Activated CD8-positive, alpha-beta T cell treated with anti-CD3 and anti-CD28 coated beads, Interleukin-2, amount 10 ng/mL, durations not matched to agents 7 days and 5 days (primary cell): ENCODE measurements at regions of chr11 and their contacts with region 1.

Region 1: GRCh38 chr11:57480409-57481137 is 20.2 kb downstream of the RTN4RL2 start:
- DNase-seq: peak; percentile 87
- ATAC-seq: peak; percentile 68
- H3K4me3 Mint-ChIP-seq: no peak overlapping the region
- H3K27ac Mint-ChIP-seq: no peak overlapping the region
- H3K4me1 Mint-ChIP-seq: peaks cover 27% of the 10 kb centered on the region
- H3K27me3 Mint-ChIP-seq: peaks cover 39% of the 10 kb centered on the region

Region 2: DNA sequence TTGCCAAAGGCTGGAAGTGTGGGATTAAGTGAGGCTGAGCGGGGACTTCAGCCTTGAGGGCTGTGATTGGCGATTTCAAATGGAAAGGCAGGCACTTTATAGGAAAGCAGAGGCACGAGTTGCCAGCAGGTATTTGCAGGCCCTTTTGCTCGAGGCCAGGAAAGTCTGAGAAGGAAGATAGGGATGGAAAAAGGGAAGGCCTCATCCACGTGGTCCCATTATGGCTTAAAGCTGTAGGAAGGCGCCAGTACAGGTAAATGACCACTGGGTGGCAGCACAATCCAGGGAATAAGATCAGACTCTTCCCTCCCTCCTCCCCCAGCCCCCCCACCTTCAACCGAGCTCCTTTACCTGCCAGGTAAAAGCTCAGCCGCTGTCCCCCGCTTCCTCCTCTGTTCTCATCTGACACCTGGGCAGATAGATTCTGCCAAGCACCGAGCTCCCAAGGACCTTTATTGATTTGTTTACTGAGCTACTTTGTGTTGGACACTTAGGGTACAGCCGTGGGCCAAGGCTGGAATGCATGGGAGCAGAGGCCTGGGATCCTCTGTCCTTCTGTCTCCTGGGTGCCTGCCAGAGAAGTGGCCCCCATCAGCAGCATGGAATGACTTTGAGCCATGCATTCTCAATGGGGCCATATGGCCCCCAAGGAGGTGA is 134.9 kb before region 1 on chr11:
- CTCF ChIA-PET with region 1: interaction called, 10 read pairs
- POLR2A ChIA-PET with region 1: no interaction called
- DNase-seq: peak; percentile 76
- ATAC-seq: peak; percentile 62
- H3K4me3 Mint-ChIP-seq: no peak overlapping the region
- H3K27ac Mint-ChIP-seq: no peak overlapping the region
- H3K4me1 Mint-ChIP-seq: peaks cover 3% of the 10 kb centered on the region
- H3K27me3 Mint-ChIP-seq: peaks cover under 1% of the 10 kb centered on the region

Region 3: GRCh38 chr11:57426929-57427726 is 53.4 kb before region 1 on chr11 and contains the start of gene SLC43A3:
- CTCF ChIA-PET with region 1: interaction called, 13 read pairs
- POLR2A ChIA-PET with region 1: no interaction called
- DNase-seq: peak; percentile 80
- ATAC-seq: peak; percentile 70
- H3K4me3 Mint-ChIP-seq: peak within 1 kb of the TSS; percentile 88
- H3K27ac Mint-ChIP-seq: peak within 1 kb of the TSS; percentile 88
- H3K4me1 Mint-ChIP-seq: peaks cover 49% of the 10 kb centered on the region
- H3K27me3 Mint-ChIP-seq: peaks cover 10% of the 10 kb centered on the region
- total RNA-seq, gene SLC43A3: 103 to 120 TPM